Activated T-helper 1 cell treated with anti-CD3 and anti-CD28 coated beads, Interleukin-12 subunit alpha, Interleukin-12 subunit beta, Interleukin-2, Interleukin-4 antibody, amounts not matched to agents 30 ng/mL and 10 ng/mL and 1 ng/mL, durations not matched to agents 14 hours and 24 hours and 36 hours (primary cell): ENCODE measurements at regions of chr12 and their contacts with region 1.

Region 1: GRCh38 chr12:22018860-22019259 is 27.2 kb upstream of the CMAS start:
- DNase-seq: no peak
- H3K4me3 Mint-ChIP-seq: no peak overlapping the region
- H3K27ac Mint-ChIP-seq: no peak overlapping the region
- H3K4me1 Mint-ChIP-seq: no peaks in the 10 kb centered on the region
- H3K27me3 Mint-ChIP-seq: no peaks in the 10 kb centered on the region

Region 2: DNA sequence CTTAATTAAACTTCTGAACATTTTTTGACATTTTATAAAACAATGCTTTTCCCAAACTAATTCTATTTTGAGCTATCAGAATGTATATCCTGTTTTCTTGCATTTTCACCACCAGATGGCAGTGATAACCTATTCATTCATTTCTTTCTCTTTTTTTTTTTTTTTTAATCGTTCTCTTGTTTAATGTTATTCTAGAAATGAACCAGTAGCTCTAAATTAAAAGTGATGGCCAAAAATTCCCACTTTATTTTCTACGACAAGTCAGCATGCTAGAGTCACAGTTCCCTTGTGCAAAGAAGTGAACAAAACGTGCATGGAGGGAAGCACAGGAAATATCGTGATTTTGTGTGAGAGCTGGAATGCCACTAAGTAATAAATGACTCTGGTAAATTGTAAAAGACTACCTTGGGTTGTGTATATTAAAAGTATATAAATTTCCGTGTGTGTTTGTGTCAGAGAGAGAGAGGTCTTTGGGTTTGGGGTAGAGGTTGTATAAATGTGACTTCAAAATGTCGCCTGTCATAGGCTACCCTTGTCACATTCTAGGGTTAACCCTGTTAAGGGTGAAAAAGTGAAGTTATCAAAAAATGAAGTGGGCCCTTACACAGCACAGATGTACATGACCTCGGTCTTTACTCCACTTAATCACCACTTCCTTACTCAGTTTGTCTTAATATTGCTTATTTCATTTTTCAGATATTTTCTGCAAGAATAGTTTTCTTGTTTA is 320.8 kb before region 1 on chr12:
- intact Hi-C with region 1: loop called (anchors 1 kb)
- DNase-seq: no peak
- H3K4me3 Mint-ChIP-seq: no peak overlapping the region
- H3K27ac Mint-ChIP-seq: no peak overlapping the region
- H3K4me1 Mint-ChIP-seq: no peaks in the 10 kb centered on the region
- H3K27me3 Mint-ChIP-seq: peaks cover 10% of the 10 kb centered on the region

Region 3: GRCh38 chr12:21984375-21984774 is 34.5 kb before region 1 on chr12:
- intact Hi-C with region 1: no loop called
- DNase-seq: no peak
- H3K4me3 Mint-ChIP-seq: no peak overlapping the region
- H3K27ac Mint-ChIP-seq: no peak overlapping the region
- H3K4me1 Mint-ChIP-seq: no peaks in the 10 kb centered on the region
- H3K27me3 Mint-ChIP-seq: peaks cover 4% of the 10 kb centered on the region

Region 4: GRCh38 chr12:21998782-21999181 is 20.1 kb before region 1 on chr12:
- intact Hi-C with region 1: no loop called
- DNase-seq: no peak
- H3K4me3 Mint-ChIP-seq: no peak overlapping the region
- H3K27ac Mint-ChIP-seq: no peak overlapping the region
- H3K4me1 Mint-ChIP-seq: no peaks in the 10 kb centered on the region
- H3K27me3 Mint-ChIP-seq: peaks cover 2% of the 10 kb centered on the region

Region 5: GRCh38 chr12:22431693-22432251 is 412.9 kb after region 1 on chr12:
- intact Hi-C with region 1: no loop called
- DNase-seq: no peak
- H3K4me3 Mint-ChIP-seq: peak overlapping the region; percentile 12
- H3K27ac Mint-ChIP-seq: no peak overlapping the region
- H3K4me1 Mint-ChIP-seq: peaks cover 8% of the 10 kb centered on the region
- H3K27me3 Mint-ChIP-seq: no peaks in the 10 kb centered on the region